CD8-positive, alpha-beta memory T cell (primary cell): ENCODE measurements at regions of chr19 and their contacts with region 1.

Region 1: DNA sequence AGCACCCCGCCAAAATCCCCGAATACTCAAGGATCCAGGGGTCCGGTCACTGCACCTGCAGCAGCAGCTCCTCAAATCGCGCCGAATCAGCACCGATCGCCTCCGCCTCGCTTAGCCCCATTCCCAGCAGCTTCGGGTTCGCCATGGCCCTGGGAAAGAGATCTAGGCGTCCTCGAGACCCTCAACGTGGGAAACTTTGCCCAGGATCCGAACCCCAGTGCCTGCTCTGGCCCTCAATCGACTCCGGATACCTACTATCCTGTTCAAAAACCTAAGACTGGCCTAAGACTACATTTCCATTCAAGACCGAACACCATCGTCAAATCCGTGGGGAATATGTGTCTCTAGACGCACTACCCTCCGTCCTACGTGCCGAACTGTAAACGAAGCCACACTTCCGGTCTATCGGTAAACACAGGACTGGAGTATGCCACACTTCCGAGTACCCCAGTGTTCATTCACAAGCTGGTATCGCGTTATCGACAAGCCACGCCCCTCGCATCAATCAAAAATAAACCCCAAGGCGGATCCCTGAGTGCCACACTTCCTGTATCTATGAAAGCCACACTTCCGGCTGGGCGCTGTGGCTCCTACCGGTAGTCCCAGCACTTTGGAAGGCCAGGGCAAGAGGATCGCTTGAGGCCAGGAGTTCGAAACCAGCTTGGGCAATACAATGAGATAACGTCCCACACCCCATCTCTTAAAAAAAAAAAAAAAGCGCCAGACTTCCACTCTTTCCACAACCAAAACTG is at the start of gene PIH1D1:
- DNase-seq: peak; percentile 88 to 97 (median 93)
- H3K4me3 ChIP-seq: peak within 1 kb of the TSS; percentile 99
- H3K4me3 Mint-ChIP-seq: peak within 1 kb of the TSS; percentile 93 to 100 (median 98)
- H3K27ac ChIP-seq: peak within 1 kb of the TSS; percentile 99
- H3K27ac Mint-ChIP-seq: peak within 1 kb of the TSS; percentile 80 to 100 (median 100)
- H3K4me1 ChIP-seq: peaks cover 48% of the 10 kb centered on the region
- H3K4me1 Mint-ChIP-seq: peaks cover 43 to 69% (median 48%) of the 10 kb centered on the region in 3 donors
- H3K27me3 ChIP-seq: no peaks in the 10 kb centered on the region
- H3K27me3 Mint-ChIP-seq: no peaks in the 10 kb centered on the region
- total RNA-seq, gene PIH1D1: 132 to 138 TPM

Region 2: DNA sequence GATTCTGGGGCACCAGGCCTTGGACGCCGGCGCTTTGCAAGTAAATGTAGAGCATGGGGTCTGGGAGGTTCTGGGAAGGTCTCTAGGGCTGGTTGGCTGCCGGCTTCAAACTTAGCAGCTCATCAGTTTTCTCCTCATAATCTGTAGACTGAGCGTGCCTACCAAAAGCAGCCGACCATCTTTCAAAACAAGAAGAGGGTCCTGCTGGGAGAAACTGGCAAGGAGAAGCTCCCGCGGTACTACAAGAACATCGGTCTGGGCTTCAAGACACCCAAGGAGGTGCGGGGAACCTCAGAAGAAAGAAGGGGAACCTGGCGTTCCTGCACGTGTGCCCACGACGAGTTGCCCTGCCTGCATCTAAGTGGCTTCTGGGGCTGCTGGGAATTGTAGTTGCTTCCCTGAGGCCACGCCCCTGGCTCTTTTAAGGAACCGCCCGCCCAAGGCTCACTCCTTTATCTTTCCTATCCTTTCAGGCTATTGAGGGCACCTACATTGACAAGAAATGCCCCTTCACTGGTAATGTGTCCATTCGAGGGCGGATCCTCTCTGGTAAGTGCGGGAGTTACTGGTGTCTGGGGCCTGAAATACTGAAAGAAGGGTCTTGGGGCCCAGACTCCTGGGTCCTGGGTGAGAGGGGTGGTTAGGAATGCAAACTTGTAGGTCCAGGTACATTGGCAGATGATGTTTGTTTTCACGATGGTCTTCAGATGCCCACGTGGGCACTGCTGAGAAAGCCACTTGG is 45.6 kb after region 1 on chr19:
- CTCF ChIA-PET with region 1: interaction called, 3 read pairs
- POLR2A ChIA-PET with region 1: interaction called, 30 read pairs
- DNase-seq: peak; percentile 66 to 83 (median 74)
- H3K4me3 ChIP-seq: peak overlapping the region; percentile 95
- H3K4me3 Mint-ChIP-seq: peak overlapping the region; percentile 95 to 100 (median 100)
- H3K27ac ChIP-seq: peak overlapping the region; percentile 94
- H3K27ac Mint-ChIP-seq: peak overlapping the region; percentile 88 to 99 (median 98)
- H3K4me1 ChIP-seq: peaks cover 49% of the 10 kb centered on the region
- H3K4me1 Mint-ChIP-seq: peaks cover 58 to 70% (median 67%) of the 10 kb centered on the region in 3 donors
- H3K27me3 ChIP-seq: no peaks in the 10 kb centered on the region
- H3K27me3 Mint-ChIP-seq: peaks cover 0 to 19% of the 10 kb centered on the region in 2 donors